CD8-positive, alpha-beta T cell (primary cell): ENCODE measurements at regions of chr17 and their contacts with region 1.

Region 1: DNA sequence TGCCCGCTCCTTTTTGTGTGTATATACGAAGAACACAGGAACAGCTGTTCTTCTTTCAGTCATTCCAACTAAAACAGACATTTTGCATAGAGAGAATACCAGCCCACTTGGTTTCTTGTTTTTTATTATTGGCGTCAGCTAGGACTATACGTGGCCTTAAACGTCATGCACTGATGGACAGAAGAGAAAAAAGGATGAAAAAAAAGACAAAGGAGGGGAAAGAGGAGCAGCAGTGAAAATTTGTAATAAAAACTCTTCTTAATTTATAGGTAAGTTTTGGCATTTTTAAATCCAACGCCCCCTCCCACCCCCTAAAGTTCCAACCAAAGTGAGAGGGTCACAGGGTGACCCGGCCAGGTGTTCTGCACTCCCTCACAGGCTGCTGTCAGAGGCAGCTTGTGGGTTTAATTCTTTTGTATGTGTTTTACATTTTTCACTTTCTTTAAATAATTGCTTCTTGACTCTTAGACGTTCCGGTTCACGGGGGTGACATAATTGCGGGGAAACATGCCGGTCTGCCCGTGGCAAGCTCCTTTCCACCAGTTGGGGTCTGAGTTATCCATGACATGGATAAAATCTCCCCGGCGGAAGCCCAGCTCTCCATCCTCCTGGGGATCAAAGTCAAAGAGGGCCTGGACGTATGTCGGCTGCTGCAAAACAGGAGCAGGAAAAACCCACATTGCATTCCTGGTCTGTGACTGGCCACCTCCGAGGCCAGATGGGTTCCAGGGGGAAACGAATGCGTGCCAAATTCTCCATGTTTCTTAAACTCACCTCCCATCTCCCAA is 30.9 kb upstream of the SLC25A19 start:
- DNase-seq: no peak
- ATAC-seq: no peak
- H3K4me3 ChIP-seq: no peak overlapping the region
- H3K4me3 Mint-ChIP-seq: no peak overlapping the region
- H3K27ac ChIP-seq: no peak overlapping the region
- H3K27ac Mint-ChIP-seq: no peak overlapping the region
- H3K4me1 ChIP-seq: peaks cover 5% of the 10 kb centered on the region
- H3K4me1 Mint-ChIP-seq: peaks cover 6% of the 10 kb centered on the region
- H3K27me3 ChIP-seq: no peaks in the 10 kb centered on the region
- H3K27me3 Mint-ChIP-seq: no peaks in the 10 kb centered on the region
- CTCF ChIP-seq: no peak

Region 2: GRCh38 chr17:75338335-75338734 is 18.2 kb after region 1 on chr17:
- CTCF ChIA-PET with region 1: interaction called, 19 read pairs
- POLR2A ChIA-PET with region 1: interaction called, 3 read pairs
- intact Hi-C with region 1: no loop called
- DNase-seq: peak in 1 of 9 experiments; percentile 57
- ATAC-seq: peak; percentile 45
- H3K4me3 ChIP-seq: peak overlapping the region in 1 of 2 experiments; percentile 5
- H3K4me3 Mint-ChIP-seq: peak overlapping the region; percentile 62
- H3K27ac ChIP-seq: peak overlapping the region; percentile 12 to 73
- H3K27ac Mint-ChIP-seq: peak overlapping the region; percentile 91
- H3K4me1 ChIP-seq: peaks cover 78% of the 10 kb centered on the region
- H3K4me1 Mint-ChIP-seq: peaks cover 78% of the 10 kb centered on the region
- H3K27me3 ChIP-seq: no peaks in the 10 kb centered on the region
- H3K27me3 Mint-ChIP-seq: no peaks in the 10 kb centered on the region
- CTCF ChIP-seq: no peak

Region 3: DNA sequence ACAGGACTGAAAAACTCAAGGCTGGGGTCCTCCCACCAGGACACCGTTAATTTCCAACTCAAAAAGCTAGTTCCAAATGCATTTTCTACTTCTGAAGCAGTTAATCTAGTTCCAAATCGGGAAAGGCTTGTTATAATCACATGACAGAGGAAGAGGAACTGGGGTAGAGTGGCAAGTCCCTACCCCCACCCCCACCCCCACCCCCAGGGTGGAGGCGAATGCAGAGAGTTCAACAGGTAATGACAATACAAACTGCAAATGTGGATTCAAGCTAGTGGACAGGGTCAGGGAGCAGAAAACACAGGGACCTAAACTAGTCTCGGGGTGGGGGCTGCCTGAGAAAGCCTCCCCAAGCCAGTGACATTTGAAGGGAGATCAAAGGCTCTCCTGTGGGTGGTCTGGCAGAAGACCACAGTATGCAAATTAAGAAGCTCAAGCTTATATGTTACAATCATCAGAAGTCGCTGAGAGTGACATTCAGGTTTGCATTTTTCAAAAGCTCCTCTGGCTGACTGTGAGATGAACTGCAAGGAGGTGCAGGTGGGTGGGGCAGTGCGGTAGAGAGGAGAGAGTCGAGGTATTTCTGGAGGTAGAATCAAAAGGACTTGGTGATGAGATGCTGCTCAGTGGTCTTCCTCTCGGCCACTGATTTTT is 25.5 kb after region 1 on chr17:
- CTCF ChIA-PET with region 1: interaction called, 21 read pairs
- POLR2A ChIA-PET with region 1: interaction called, 3 read pairs
- intact Hi-C with region 1: no loop called
- DNase-seq: peak in 8 of 9 experiments; percentile 11 to 81 (median 61)
- ATAC-seq: peak; percentile 81
- H3K4me3 ChIP-seq: peak overlapping the region; percentile 10 to 33
- H3K4me3 Mint-ChIP-seq: peak overlapping the region; percentile 72
- H3K27ac ChIP-seq: peak overlapping the region; percentile 8 to 64
- H3K27ac Mint-ChIP-seq: peak overlapping the region; percentile 93
- H3K4me1 ChIP-seq: peaks cover 82% of the 10 kb centered on the region
- H3K4me1 Mint-ChIP-seq: peaks cover 90% of the 10 kb centered on the region
- H3K27me3 ChIP-seq: no peaks in the 10 kb centered on the region
- H3K27me3 Mint-ChIP-seq: no peaks in the 10 kb centered on the region
- CTCF ChIP-seq: no peak

Region 4: GRCh38 chr17:75380315-75380714 is 60.2 kb after region 1 on chr17:
- CTCF ChIA-PET with region 1: interaction called, 15 read pairs
- POLR2A ChIA-PET with region 1: interaction called, 3 read pairs
- intact Hi-C with region 1: no loop called
- DNase-seq: no peak
- ATAC-seq: no peak
- H3K4me3 ChIP-seq: no peak overlapping the region
- H3K4me3 Mint-ChIP-seq: no peak overlapping the region
- H3K27ac ChIP-seq: no peak overlapping the region
- H3K27ac Mint-ChIP-seq: peak overlapping the region; percentile 28
- H3K4me1 ChIP-seq: peaks cover 19% of the 10 kb centered on the region
- H3K4me1 Mint-ChIP-seq: peaks cover 61% of the 10 kb centered on the region
- H3K27me3 ChIP-seq: no peaks in the 10 kb centered on the region
- H3K27me3 Mint-ChIP-seq: no peaks in the 10 kb centered on the region
- CTCF ChIP-seq: no peak

Region 5: GRCh38 chr17:75393523-75394331 is 73.6 kb after region 1 on chr17:
- CTCF ChIA-PET with region 1: interaction called, 19 read pairs
- POLR2A ChIA-PET with region 1: interaction called, 4 read pairs
- intact Hi-C with region 1: no loop called
- DNase-seq: peak; percentile 47 to 92 (median 83)
- ATAC-seq: peak; percentile 84
- H3K4me3 ChIP-seq: peak overlapping the region; percentile 49 to 53
- H3K4me3 Mint-ChIP-seq: peak overlapping the region; percentile 94
- H3K27ac ChIP-seq: peak overlapping the region; percentile 3 to 63
- H3K27ac Mint-ChIP-seq: peak overlapping the region; percentile 90
- H3K4me1 ChIP-seq: peaks cover 55% of the 10 kb centered on the region
- H3K4me1 Mint-ChIP-seq: peaks cover 78% of the 10 kb centered on the region
- H3K27me3 ChIP-seq: no peaks in the 10 kb centered on the region
- H3K27me3 Mint-ChIP-seq: no peaks in the 10 kb centered on the region
- CTCF ChIP-seq: no peak

Region 6: GRCh38 chr17:75400326-75400939 is 80.3 kb after region 1 on chr17:
- CTCF ChIA-PET with region 1: interaction called, 208 read pairs
- POLR2A ChIA-PET with region 1: interaction called, 9 read pairs
- intact Hi-C with region 1: loop called (anchors 1 kb)
- DNase-seq: no peak
- ATAC-seq: no peak
- H3K4me3 ChIP-seq: no peak overlapping the region
- H3K4me3 Mint-ChIP-seq: no peak overlapping the region
- H3K27ac ChIP-seq: no peak overlapping the region
- H3K27ac Mint-ChIP-seq: no peak overlapping the region
- H3K4me1 ChIP-seq: peaks cover 48% of the 10 kb centered on the region
- H3K4me1 Mint-ChIP-seq: peaks cover 61% of the 10 kb centered on the region
- H3K27me3 ChIP-seq: no peaks in the 10 kb centered on the region
- H3K27me3 Mint-ChIP-seq: no peaks in the 10 kb centered on the region
- CTCF ChIP-seq: no peak

Region 7: GRCh38 chr17:75442168-75443103 is 122.3 kb after region 1 on chr17:
- CTCF ChIA-PET with region 1: no interaction called
- POLR2A ChIA-PET with region 1: no interaction called
- intact Hi-C with region 1: no loop called
- DNase-seq: no peak
- ATAC-seq: no peak
- H3K4me3 ChIP-seq: no peak overlapping the region
- H3K4me3 Mint-ChIP-seq: no peak overlapping the region
- H3K27ac ChIP-seq: no peak overlapping the region
- H3K27ac Mint-ChIP-seq: no peak overlapping the region
- H3K4me1 ChIP-seq: no peaks in the 10 kb centered on the region
- H3K4me1 Mint-ChIP-seq: no peaks in the 10 kb centered on the region
- H3K27me3 ChIP-seq: no peaks in the 10 kb centered on the region
- H3K27me3 Mint-ChIP-seq: no peaks in the 10 kb centered on the region
- CTCF ChIP-seq: no peak